ENCODE measurements at regions of chr9 and their contacts with region 1.

Region 1: DNA sequence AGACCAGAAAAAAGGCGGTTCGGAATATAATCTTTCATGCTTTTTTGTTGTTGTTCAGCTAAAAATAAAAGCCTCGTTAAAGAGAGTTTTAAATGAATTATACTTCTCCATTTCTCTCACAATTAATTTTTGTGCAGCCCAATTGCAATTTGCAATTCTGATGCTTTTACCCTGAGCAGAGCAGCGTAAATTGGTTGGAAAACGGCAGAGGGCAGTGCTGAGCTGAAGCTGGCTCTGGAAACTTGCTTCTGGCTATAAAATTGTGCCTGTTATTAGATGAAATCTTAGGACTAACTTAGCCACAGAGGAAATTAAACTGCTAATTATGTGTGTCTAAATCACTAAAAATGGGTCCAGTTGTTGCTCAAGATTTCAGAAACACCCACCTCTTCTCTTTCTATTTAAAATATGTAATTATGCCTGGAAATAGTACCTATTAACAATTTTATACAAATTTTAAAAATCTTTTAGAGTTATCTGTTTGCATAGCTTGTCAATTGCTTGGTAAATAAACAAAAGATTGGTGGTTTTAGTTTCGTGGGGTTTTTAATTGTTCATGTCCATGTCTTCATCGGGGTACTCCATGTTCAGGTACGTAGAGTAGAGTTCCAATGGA is 441.8 kb upstream of the TLE4 start:
- DNase-seq: peak; percentile 1
- ATAC-seq: peak; percentile 51; the same call in 1 of the 3 replicates
- H3K4me3 ChIP-seq: no peak overlapping the region
- H3K27ac ChIP-seq: no peak overlapping the region
- H3K4me1 ChIP-seq: no peaks in the 10 kb centered on the region
- H3K27me3 ChIP-seq: no peaks in the 10 kb centered on the region
- CTCF ChIP-seq: peak; percentile 59
- EP300 ChIP-seq: no peak
- POLR2A ChIP-seq: no peak
- RAD21 ChIP-seq: no peak

Region 2: DNA sequence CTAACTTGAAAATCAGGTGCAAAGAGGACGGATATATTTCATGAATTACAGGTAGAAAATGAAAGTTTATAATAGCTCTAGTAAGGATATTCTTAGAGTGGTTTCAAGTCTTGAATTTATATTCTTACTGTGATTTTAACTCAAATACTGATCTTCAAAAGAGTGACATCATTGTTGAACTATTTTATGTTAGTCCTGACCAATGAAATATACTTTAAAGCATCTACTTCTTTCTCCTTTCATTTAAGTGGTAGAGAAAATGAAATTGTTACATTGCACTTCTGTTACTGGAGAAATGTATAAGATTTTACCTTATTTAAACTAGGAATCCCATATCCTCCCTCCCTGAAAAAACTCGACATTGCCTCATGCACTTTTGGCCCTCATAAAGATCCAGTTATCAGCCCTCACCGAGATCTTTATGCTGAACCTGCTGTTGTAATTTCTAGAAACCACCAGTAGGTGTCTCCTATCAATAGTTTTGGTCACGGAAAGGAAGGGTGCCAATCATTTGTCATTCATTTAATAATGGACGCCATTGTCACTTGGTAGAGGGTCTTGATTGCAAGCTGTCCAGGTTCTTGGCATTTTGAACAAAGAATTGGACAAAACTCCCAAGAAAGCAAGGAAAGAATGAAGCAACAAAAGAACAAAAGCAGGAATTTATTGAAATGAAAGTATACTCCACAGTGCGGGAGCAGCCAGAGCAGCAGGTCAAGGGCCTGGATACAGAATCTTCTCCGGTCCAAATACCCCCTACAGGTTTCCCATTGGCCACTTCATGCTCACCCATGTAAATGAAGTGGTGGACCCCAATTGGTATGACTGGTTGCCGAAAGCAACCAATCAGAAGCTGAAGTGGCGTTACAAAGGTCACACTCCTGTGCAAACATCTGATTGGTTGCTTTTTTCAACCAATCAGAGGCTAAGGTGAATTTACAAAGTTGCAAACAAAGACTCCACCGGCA is 308.8 kb before region 1 on chr9:
- CTCF ChIA-PET with region 1: no interaction called
- POLR2A ChIA-PET with region 1: no interaction called
- in situ Hi-C with region 1: no loop called
- intact Hi-C with region 1: loop called (anchors 5 kb)
- DNase-seq: peak; percentile 49
- ATAC-seq: peak; percentile 87
- H3K4me3 ChIP-seq: peak overlapping the region; percentile 5 to 41 (median 37); a peak in 3 of 6 replicates
- H3K27ac ChIP-seq: no peak overlapping the region
- H3K4me1 ChIP-seq: 0 out of 2 replicates have a peak, but pooled peaks cover 5% of the 10 kb centered on the region
- H3K27me3 ChIP-seq: no peaks in the 10 kb centered on the region
- CTCF ChIP-seq: peak; percentile 65
- EP300 ChIP-seq: no peak
- POLR2A ChIP-seq: no peak
- RAD21 ChIP-seq: no peak

Region 3: DNA sequence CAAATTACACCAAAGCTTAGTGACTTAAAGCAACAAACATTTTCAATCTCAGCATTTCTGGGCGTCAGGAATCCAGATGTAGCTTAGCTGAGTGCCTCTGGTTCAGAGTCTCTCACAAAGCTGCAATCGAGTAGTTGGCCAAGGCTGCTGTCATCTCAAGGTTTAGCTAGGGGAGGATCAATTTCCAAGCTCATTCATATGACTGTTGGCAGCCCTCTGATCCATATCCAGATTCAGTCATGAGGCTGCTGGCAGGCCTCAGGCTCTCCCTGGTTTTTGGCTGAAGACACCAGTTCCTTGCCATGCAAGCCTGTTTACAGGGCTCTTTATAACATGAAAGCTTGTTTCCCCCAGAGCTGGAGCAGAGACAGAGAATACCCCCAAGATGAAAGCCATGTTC is 22.3 kb after region 1 on chr9:
- CTCF ChIA-PET with region 1: no interaction called
- POLR2A ChIA-PET with region 1: no interaction called
- in situ Hi-C with region 1: no loop called
- intact Hi-C with region 1: no loop called
- DNase-seq: no peak
- ATAC-seq: no peak
- H3K4me3 ChIP-seq: no peak overlapping the region
- H3K27ac ChIP-seq: no peak overlapping the region
- H3K4me1 ChIP-seq: no peaks in the 10 kb centered on the region
- H3K27me3 ChIP-seq: no peaks in the 10 kb centered on the region
- CTCF ChIP-seq: no peak
- EP300 ChIP-seq: no peak
- POLR2A ChIP-seq: no peak
- RAD21 ChIP-seq: no peak

Region 4: DNA sequence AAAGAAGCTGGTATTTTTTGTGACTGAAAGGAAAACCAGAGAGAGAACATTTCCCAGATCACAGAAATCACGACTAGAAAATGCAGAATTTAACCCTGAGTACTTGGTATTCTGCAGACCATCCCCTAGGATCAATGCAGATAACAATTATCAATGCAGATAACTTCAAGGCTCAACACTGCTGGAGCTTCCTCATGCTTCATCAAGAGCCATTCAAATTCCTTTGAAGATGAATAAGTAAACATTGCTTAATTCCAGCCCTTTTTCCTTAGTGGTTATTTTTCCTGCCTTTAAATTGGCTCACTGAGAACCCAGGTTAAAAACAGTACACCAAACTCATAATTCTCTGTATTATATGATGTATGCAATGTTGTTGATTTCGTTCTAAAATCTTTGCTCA is 71.7 kb after region 1 on chr9:
- CTCF ChIA-PET with region 1: no interaction called
- POLR2A ChIA-PET with region 1: no interaction called
- in situ Hi-C with region 1: no loop called
- intact Hi-C with region 1: loop called (anchors 2 kb)
- DNase-seq: no peak
- ATAC-seq: no peak
- H3K4me3 ChIP-seq: no peak overlapping the region
- H3K27ac ChIP-seq: no peak overlapping the region
- H3K4me1 ChIP-seq: no peaks in the 10 kb centered on the region
- H3K27me3 ChIP-seq: no peaks in the 10 kb centered on the region; a peak in 1 of 5 replicates
- CTCF ChIP-seq: no peak
- EP300 ChIP-seq: no peak
- POLR2A ChIP-seq: no peak
- RAD21 ChIP-seq: no peak

Region 5: DNA sequence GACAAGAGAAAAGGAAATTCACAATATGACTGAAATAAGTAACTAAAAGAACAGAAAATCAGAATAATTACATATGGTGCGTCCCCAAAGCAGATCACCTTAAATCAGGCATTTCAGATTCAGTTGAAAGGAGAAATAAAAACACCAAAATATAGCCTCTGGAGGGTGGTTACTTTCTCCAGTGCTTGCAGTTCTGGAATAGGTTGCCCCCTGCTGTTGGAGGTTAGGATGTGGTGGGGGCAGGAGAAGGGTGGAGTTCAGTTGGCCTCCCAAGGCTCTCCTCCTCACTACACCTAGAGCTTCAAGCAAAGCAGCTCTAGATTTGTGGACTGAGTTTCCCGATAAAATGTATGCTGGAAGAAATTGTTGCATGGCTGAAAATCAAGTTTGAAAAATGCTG is 103.6 kb after region 1 on chr9:
- CTCF ChIA-PET with region 1: no interaction called
- POLR2A ChIA-PET with region 1: no interaction called
- in situ Hi-C with region 1: no loop called
- intact Hi-C with region 1: loop called (anchors 1 kb)
- DNase-seq: peak; percentile 33
- ATAC-seq: peak; percentile 90
- H3K4me3 ChIP-seq: no peak overlapping the region
- H3K27ac ChIP-seq: no peak overlapping the region
- H3K4me1 ChIP-seq: no peaks in the 10 kb centered on the region
- H3K27me3 ChIP-seq: no peaks in the 10 kb centered on the region
- CTCF ChIP-seq: peak; percentile 54
- EP300 ChIP-seq: no peak
- POLR2A ChIP-seq: no peak
- RAD21 ChIP-seq: no peak

Region 6: DNA sequence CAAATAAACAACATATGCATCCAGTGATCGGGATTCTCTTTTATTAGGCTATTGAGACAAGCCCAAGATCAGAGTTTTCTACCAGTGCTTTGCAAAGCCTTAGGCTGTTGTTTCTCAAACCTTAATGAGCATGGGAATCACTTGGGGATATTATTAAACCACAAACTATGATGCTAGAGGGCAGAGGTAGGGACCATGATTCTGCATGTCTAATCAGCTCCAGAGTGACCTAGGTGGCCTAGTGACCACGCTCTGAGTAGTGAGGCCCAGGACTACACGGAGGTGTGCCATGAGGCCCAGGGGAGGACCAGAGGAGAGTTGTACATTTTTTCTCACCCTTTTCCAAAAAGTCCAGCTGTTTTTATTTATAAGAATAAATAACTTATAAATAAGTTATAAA is 143.3 kb after region 1 on chr9:
- CTCF ChIA-PET with region 1: no interaction called
- POLR2A ChIA-PET with region 1: no interaction called
- in situ Hi-C with region 1: no loop called
- intact Hi-C with region 1: no loop called
- DNase-seq: no peak
- ATAC-seq: no peak
- H3K4me3 ChIP-seq: no peak overlapping the region
- H3K27ac ChIP-seq: no peak overlapping the region
- H3K4me1 ChIP-seq: no peaks in the 10 kb centered on the region
- H3K27me3 ChIP-seq: no peaks in the 10 kb centered on the region
- CTCF ChIP-seq: no peak
- EP300 ChIP-seq: no peak
- POLR2A ChIP-seq: no peak
- RAD21 ChIP-seq: no peak

Region 7: DNA sequence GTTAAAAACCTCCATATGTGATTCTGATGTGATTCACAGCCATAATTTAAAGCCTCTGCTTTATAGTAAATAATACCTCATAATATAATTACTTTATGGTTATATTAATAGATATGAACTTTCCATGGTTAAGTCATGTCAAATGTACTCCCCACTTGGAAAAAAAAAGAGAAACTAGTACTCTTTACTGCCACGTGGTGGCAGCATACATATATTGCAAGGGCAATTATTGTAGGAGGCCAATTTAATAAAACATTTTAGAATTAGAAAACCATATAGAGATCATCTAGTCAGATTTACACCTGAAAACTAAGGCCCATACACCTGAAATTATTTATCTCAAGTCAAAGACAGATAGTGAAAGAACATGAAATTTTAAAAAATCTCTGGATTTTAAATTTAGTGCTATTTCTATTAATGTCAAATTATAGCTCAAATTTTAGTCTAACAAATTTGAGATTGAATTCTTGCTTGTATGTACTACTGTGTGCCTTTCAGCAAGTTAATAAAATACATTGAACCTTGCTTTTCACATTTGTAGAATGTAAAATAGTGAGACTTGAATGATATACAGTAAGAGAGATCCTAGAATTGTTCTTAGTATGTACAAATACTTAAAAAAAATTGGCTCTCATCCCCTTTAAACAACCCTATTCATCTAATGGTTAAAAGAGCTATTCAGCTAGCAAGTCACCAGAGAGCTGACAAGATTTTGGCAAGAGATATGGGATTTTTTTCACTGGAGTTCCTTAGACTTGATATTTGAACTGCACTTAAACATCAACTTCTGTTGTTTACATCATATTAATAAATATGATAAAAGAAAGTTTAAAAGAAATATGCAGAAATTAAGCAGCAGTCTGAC is 1045.5 kb after region 1 on chr9:
- CTCF ChIA-PET with region 1: no interaction called
- POLR2A ChIA-PET with region 1: no interaction called
- in situ Hi-C with region 1: no loop called
- intact Hi-C with region 1: loop called (anchors 5 kb)
- DNase-seq: peak; percentile 23
- ATAC-seq: no peak
- H3K4me3 ChIP-seq: no peak overlapping the region
- H3K27ac ChIP-seq: no peak overlapping the region
- H3K4me1 ChIP-seq: no peaks in the 10 kb centered on the region
- H3K27me3 ChIP-seq: no peaks in the 10 kb centered on the region
- CTCF ChIP-seq: peak; percentile 45
- EP300 ChIP-seq: no peak
- POLR2A ChIP-seq: no peak
- RAD21 ChIP-seq: no peak

Measured in HepG2 (cell line).